Ascending aorta (tissue), 2 donors: ENCODE measurements at regions of chr13 and their contacts with region 1.

Region 1: GRCh38 chr13:51803422-51804294 is at the start of gene DHRS12:
- DNase-seq: peak; percentile 67 to 96
- H3K4me3 ChIP-seq: peak within 1 kb of the TSS; percentile 79 to 98
- H3K27ac ChIP-seq: peak within 1 kb of the TSS; percentile 98
- H3K4me1 ChIP-seq: peaks cover 12 to 40% of the 10 kb centered on the region in 2 donors
- H3K27me3 ChIP-seq: no peaks in the 10 kb centered on the region
- CTCF ChIP-seq: no peak
- total RNA-seq, gene DHRS12: 7.9 TPM

Region 2: GRCh38 chr13:50123862-50124536 is 1679.7 kb before region 1 on chr13:
- intact Hi-C with region 1: loop called (anchors 10 kb)
- DNase-seq: peak; percentile 92 to 98
- H3K4me3 ChIP-seq: peak overlapping the region; percentile 76 to 90
- H3K27ac ChIP-seq: peak overlapping the region; percentile 100
- H3K4me1 ChIP-seq: peaks cover 0 to 20% of the 10 kb centered on the region in 2 donors
- H3K27me3 ChIP-seq: no peaks in the 10 kb centered on the region
- CTCF ChIP-seq: no peak

Region 3: GRCh38 chr13:51562011-51562671 is 241.5 kb before region 1 on chr13:
- intact Hi-C with region 1: no loop called
- DNase-seq: no peak
- H3K4me3 ChIP-seq: no peak overlapping the region
- H3K27ac ChIP-seq: no peak overlapping the region
- H3K4me1 ChIP-seq: no peaks in the 10 kb centered on the region
- H3K27me3 ChIP-seq: no peaks in the 10 kb centered on the region
- CTCF ChIP-seq: no peak

Region 4: GRCh38 chr13:51697181-51697580 is 106.5 kb before region 1 on chr13:
- intact Hi-C with region 1: no loop called
- DNase-seq: peak in 1 of 2 donors; percentile 66
- H3K4me3 ChIP-seq: no peak overlapping the region
- H3K27ac ChIP-seq: peak overlapping the region; percentile 65 to 79
- H3K4me1 ChIP-seq: peaks cover 2 to 11% of the 10 kb centered on the region in 2 donors
- H3K27me3 ChIP-seq: no peaks in the 10 kb centered on the region
- CTCF ChIP-seq: no peak

Region 5: GRCh38 chr13:51729866-51730546 is 73.7 kb before region 1 on chr13:
- intact Hi-C with region 1: loop called (anchors 2 kb)
- DNase-seq: peak; percentile 29 to 90
- H3K4me3 ChIP-seq: peak overlapping the region in 1 of 2 donors; percentile 51
- H3K27ac ChIP-seq: peak overlapping the region; percentile 84 to 93
- H3K4me1 ChIP-seq: peaks cover 15 to 47% of the 10 kb centered on the region in 2 donors
- H3K27me3 ChIP-seq: no peaks in the 10 kb centered on the region
- CTCF ChIP-seq: no peak

Region 6: GRCh38 chr13:51769455-51770127 is 34.1 kb before region 1 on chr13:
- intact Hi-C with region 1: loop called (anchors 2 kb)
- DNase-seq: peak in 1 of 2 donors; percentile 85
- H3K4me3 ChIP-seq: no peak overlapping the region
- H3K27ac ChIP-seq: peak overlapping the region; percentile 74 to 89
- H3K4me1 ChIP-seq: peaks cover 4 to 22% of the 10 kb centered on the region in 2 donors
- H3K27me3 ChIP-seq: no peaks in the 10 kb centered on the region
- CTCF ChIP-seq: no peak

Region 7: DNA sequence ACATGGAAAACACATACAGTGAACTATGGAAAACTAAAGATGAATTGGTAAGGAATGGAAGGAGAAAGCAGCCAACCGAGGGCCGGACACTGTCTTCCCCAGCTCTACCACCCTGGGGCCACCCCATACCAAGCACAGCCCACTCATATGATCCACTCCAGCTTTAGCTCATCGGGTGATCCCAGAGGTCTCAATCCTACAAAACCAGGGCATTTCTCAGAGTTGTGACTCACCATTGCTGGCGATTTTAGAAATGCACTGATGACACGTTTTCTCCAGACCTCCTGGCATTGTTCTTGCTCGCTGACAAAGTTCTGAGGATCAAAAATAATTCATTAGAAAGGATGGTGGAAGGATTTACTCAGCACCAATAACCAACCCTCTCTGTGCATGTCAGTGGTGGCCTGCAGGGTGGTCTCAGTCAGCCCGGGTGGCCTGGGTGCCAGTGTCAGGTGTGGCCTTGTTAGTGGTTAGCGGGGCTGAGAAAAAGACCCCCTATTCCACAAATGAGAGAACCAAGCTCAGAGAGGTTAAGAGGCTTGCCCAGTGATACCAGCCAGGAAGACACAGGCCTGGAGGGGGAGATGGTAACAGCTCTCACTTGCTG is 34.7 kb after region 1 on chr13:
- intact Hi-C with region 1: no loop called
- DNase-seq: no peak
- H3K4me3 ChIP-seq: no peak overlapping the region
- H3K27ac ChIP-seq: no peak overlapping the region
- H3K4me1 ChIP-seq: no peaks in the 10 kb centered on the region
- H3K27me3 ChIP-seq: no peaks in the 10 kb centered on the region
- CTCF ChIP-seq: no peak

Region 8: DNA sequence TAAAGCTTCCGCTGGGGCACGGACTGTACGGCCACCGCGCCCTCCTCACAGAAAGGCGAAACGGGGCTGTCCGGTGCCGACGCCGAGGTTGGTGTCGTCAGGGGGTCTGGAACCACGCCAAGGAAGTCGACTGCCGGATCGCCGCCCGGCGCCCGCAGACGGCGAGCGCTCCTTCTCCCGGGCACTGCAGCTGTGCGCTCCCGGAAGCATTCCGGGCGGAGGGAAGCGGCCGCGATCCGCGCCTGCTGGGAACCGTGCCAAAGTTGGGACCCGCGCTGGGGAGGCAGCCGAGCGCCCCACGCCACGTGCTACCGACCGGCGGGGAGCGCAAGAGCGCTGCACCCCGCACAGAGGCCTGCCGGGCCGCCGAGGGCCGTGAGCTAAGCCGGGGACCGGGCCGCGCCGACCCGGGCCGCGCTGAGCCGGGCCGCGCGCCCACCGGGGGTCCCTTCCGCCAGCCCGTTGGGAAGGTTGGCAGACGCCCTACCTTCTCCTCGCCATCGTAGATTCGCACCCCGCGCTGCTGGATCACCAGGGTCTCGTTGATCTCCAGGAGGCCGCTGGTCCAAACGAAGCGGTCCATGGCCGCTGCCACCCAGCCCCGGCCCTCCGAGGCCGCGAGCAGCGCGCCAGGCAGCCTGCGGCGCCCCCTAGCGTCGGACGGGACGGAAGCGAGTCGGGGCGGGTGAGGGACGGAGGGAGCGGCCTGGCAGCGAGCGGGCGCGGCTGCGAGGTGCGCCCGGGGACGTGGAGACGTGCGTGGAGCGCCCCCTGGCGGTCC is 646.5 kb after region 1 on chr13 and contains the start of gene VPS36:
- intact Hi-C with region 1: loop called (anchors 5 kb)
- DNase-seq: peak; percentile 66 to 98
- H3K4me3 ChIP-seq: peak within 1 kb of the TSS; percentile 77 to 88
- H3K27ac ChIP-seq: peak within 1 kb of the TSS; percentile 85 to 88
- H3K4me1 ChIP-seq: peaks cover 0 to 5% of the 10 kb centered on the region in 2 donors
- H3K27me3 ChIP-seq: no peaks in the 10 kb centered on the region
- CTCF ChIP-seq: peak; percentile 97 to 99 (median 98)
- total RNA-seq, gene VPS36: 69.3 TPM